ENCODE measurements at regions of chr10 and their contacts with region 1.

Region 1: GRCh38 chr10:25016376-25017154 is at the start of gene THNSL1:
- DNase-seq: peak; percentile 95 to 99 (median 97)
- ATAC-seq: peak; percentile 93
- H3K4me3 ChIP-seq: peak within 1 kb of the TSS; percentile 82
- H3K4me3 Mint-ChIP-seq: peak within 1 kb of the TSS; percentile 94
- H3K27ac ChIP-seq: peak within 1 kb of the TSS; percentile 86 to 89
- H3K27ac Mint-ChIP-seq: peak within 1 kb of the TSS; percentile 95
- H3K4me1 ChIP-seq: peaks cover 19% of the 10 kb centered on the region
- H3K4me1 Mint-ChIP-seq: peaks cover 29% of the 10 kb centered on the region
- H3K27me3 ChIP-seq: no peaks in the 10 kb centered on the region
- H3K27me3 Mint-ChIP-seq: no peaks in the 10 kb centered on the region
- CTCF ChIP-seq: no peak
- total RNA-seq, gene THNSL1: 0.31 to 0.52 TPM

Region 2: GRCh38 chr10:24625778-24626177 is 390.8 kb before region 1 on chr10:
- CTCF ChIA-PET with region 1: no interaction called
- POLR2A ChIA-PET with region 1: interaction called, 46 read pairs
- intact Hi-C with region 1: loop called (anchors 1 to 5 kb)
- DNase-seq: no peak
- ATAC-seq: no peak
- H3K4me3 ChIP-seq: no peak overlapping the region
- H3K4me3 Mint-ChIP-seq: no peak overlapping the region
- H3K27ac ChIP-seq: no peak overlapping the region
- H3K27ac Mint-ChIP-seq: peak overlapping the region; percentile 91
- H3K4me1 ChIP-seq: no peaks in the 10 kb centered on the region
- H3K4me1 Mint-ChIP-seq: peaks cover 41% of the 10 kb centered on the region
- H3K27me3 ChIP-seq: no peaks in the 10 kb centered on the region
- H3K27me3 Mint-ChIP-seq: no peaks in the 10 kb centered on the region
- CTCF ChIP-seq: no peak

Region 3: DNA sequence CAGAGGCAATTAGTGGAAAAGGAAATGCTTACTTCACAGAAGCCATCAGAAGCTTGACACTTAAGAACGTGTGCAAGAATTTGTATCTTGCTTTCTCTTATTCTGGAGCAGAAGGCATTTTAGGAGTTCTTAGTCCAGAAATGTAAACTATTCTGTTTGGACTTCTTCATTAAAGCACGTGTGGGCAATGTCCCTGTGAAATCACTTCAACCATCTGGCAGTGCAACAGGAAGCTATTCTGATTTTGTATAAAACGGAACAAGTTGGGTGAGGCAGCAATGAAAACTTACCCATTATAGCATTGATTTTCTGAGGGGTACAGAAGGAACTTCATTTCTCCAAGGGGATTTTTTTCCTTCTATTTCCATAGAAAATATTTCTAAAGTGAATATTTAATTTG is 271.6 kb before region 1 on chr10:
- CTCF ChIA-PET with region 1: no interaction called
- POLR2A ChIA-PET with region 1: no interaction called
- intact Hi-C with region 1: no loop called
- DNase-seq: no peak
- ATAC-seq: no peak
- H3K4me3 ChIP-seq: no peak overlapping the region
- H3K4me3 Mint-ChIP-seq: no peak overlapping the region
- H3K27ac ChIP-seq: no peak overlapping the region
- H3K27ac Mint-ChIP-seq: no peak overlapping the region
- H3K4me1 ChIP-seq: no peaks in the 10 kb centered on the region
- H3K4me1 Mint-ChIP-seq: peaks cover 5% of the 10 kb centered on the region
- H3K27me3 ChIP-seq: no peaks in the 10 kb centered on the region
- H3K27me3 Mint-ChIP-seq: no peaks in the 10 kb centered on the region
- CTCF ChIP-seq: no peak

Region 4: DNA sequence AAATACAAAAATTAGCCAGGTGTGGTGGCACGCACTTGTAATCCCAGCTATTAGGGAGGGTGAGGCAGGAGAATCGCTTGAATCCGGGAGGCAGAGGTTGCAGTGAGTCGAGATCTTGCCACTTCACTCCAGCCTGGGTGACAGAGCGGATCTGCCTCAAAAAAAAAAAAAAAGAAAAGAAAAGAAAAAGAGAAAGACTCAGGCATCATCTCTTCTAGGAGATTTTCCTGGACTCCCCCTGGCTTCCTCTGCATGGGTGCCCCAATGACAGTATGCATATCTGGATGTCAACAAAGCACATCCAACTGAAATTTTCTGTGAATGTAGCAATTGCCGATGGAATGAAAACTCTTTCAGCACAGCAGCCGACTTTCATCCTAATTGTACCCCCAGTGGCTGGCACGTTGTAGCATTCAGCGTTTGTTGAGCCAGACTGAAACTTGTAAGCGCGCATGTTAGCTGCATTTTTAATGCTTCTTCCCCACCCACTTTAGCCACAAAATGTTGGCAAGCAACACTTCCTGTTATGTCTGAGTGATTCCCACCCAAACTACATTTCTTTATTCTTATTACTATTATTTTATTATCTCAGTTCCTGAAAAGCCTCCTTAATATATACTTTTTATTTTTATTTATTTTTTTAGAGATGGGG is 134.4 kb before region 1 on chr10:
- CTCF ChIA-PET with region 1: no interaction called
- POLR2A ChIA-PET with region 1: no interaction called
- intact Hi-C with region 1: loop called (anchors 5 kb)
- DNase-seq: peak; percentile 17 to 80 (median 44)
- ATAC-seq: peak; percentile 87
- H3K4me3 ChIP-seq: peak overlapping the region; percentile 42
- H3K4me3 Mint-ChIP-seq: peak overlapping the region; percentile 77
- H3K27ac ChIP-seq: peak overlapping the region in 1 of 2 donors; percentile 63
- H3K27ac Mint-ChIP-seq: peak overlapping the region; percentile 91
- H3K4me1 ChIP-seq: peaks cover 47% of the 10 kb centered on the region
- H3K4me1 Mint-ChIP-seq: peaks cover 52% of the 10 kb centered on the region
- H3K27me3 ChIP-seq: no peaks in the 10 kb centered on the region
- H3K27me3 Mint-ChIP-seq: no peaks in the 10 kb centered on the region
- CTCF ChIP-seq: no peak

Region 5: GRCh38 chr10:24887855-24888231 is 128.7 kb before region 1 on chr10:
- CTCF ChIA-PET with region 1: no interaction called
- POLR2A ChIA-PET with region 1: no interaction called
- intact Hi-C with region 1: loop called (anchors 5 kb)
- DNase-seq: no peak
- ATAC-seq: no peak
- H3K4me3 ChIP-seq: peak overlapping the region; percentile 21
- H3K4me3 Mint-ChIP-seq: peak overlapping the region; percentile 64
- H3K27ac ChIP-seq: peak overlapping the region; percentile 37 to 61
- H3K27ac Mint-ChIP-seq: peak overlapping the region; percentile 76
- H3K4me1 ChIP-seq: peaks cover 45% of the 10 kb centered on the region
- H3K4me1 Mint-ChIP-seq: peaks cover 54% of the 10 kb centered on the region
- H3K27me3 ChIP-seq: no peaks in the 10 kb centered on the region
- H3K27me3 Mint-ChIP-seq: no peaks in the 10 kb centered on the region
- CTCF ChIP-seq: no peak

Region 6: DNA sequence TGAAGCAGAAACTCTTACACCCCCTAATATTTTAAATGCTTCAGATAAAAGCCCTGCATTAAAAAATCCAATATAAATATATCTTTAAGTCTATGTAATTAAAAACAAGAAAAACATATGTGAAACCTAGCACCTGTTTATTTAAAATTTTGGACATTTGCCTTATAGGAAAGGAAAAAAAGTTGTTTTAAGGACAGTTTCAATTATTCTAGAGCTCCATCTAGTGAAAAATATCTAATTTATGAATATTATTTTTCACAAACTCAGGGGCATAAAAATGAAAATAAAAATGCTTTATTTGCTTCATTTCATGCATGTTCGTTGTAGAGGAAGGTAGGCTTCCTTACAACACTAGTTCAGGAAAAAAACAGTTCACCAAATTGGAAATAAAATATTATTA is 26.7 kb before region 1 on chr10:
- CTCF ChIA-PET with region 1: no interaction called
- POLR2A ChIA-PET with region 1: no interaction called
- intact Hi-C with region 1: no loop called
- DNase-seq: no peak
- ATAC-seq: no peak
- H3K4me3 ChIP-seq: no peak overlapping the region
- H3K4me3 Mint-ChIP-seq: no peak overlapping the region
- H3K27ac ChIP-seq: no peak overlapping the region
- H3K27ac Mint-ChIP-seq: no peak overlapping the region
- H3K4me1 ChIP-seq: no peaks in the 10 kb centered on the region
- H3K4me1 Mint-ChIP-seq: no peaks in the 10 kb centered on the region
- H3K27me3 ChIP-seq: no peaks in the 10 kb centered on the region
- H3K27me3 Mint-ChIP-seq: peaks cover 3% of the 10 kb centered on the region
- CTCF ChIP-seq: peak; percentile 55

Measured in CD4-positive, alpha-beta T cell (primary cell).